Esophagus squamous epithelium (tissue), 5 donors: ENCODE measurements at regions of chr9 and their contacts with region 1.

Region 1: DNA sequence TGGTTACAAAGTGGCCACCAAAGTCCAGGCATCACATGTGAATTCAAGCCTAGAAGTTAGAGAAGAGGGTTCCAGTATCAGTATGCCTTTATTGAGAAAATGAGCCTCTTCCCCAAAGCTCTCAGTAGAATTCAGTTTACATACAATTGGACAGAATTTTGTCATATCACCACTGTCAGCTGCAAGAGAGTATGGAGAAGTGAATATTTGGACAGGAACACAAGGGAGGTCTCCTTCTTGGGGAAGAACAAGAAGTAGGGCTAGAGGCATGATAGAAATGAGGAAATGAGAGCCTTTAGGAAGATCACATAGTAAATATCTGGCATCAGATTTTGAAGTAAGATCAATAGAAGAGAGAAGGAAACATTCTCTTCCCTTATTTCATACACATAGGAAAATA is 27.8 kb upstream of the VLDLR start:
- DNase-seq: no peak
- H3K4me3 ChIP-seq: no peak overlapping the region
- H3K27ac ChIP-seq: no peak overlapping the region
- H3K4me1 ChIP-seq: no peaks in the 10 kb centered on the region
- H3K27me3 ChIP-seq: no peaks in the 10 kb centered on the region
- CTCF ChIP-seq: no peak
- POLR2A ChIP-seq: no peak

Region 2: DNA sequence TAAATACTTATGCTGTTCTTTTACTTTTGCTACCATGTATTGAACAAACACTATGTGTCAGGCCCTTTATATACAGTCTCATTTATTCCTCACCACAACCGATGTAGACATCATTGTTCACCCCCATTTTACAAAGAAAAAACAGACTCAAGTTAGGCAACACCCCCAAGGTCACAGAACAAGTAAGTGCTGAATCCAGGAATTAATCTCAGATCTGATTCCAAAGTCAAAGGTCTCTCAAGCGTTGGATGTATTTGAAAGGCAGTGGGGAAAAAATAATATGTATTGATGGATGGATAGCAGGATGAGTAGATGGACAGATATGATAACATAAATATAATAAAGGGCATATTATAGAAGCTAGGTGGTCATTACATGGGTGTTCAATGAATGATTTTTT is 57.2 kb before region 1 on chr9:
- intact Hi-C with region 1: loop called (anchors 5 kb)
- DNase-seq: no peak
- H3K4me3 ChIP-seq: no peak overlapping the region
- H3K27ac ChIP-seq: no peak overlapping the region
- H3K4me1 ChIP-seq: no peaks in the 10 kb centered on the region
- H3K27me3 ChIP-seq: no peaks in the 10 kb centered on the region
- CTCF ChIP-seq: no peak
- POLR2A ChIP-seq: no peak